CD4-positive, alpha-beta T cell (primary cell): ENCODE measurements at regions of chr16 and their contacts with region 1.

Region 1: DNA sequence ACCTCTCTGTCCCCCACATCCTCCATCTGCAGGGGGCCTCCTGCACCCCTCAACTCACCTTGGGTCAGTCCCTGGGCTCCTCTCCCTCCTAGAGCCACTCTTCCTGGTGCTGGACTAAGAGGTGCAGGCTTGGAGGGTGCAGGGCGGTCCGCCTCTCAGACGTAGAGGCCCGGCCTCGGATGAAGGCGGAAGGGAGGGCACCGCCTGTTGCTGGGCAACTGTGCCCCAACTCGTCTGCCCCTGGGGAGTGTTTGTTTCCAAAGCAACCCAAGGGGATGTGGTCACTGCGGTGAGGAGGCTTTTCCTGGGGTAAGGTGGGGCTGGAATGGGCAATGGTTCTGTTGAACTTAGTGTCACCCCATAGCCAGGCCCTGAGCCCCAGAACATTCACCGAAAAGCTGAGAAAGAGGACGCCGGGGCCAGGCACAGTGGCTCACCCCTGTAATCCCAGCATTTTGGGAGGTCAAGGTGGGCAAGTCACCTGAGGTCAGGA is at the start of gene C16orf54:
- DNase-seq: peak; percentile 88 to 99 (median 92)
- ATAC-seq: peak; percentile 82
- H3K4me3 ChIP-seq: peak within 1 kb of the TSS; percentile 74
- H3K4me3 Mint-ChIP-seq: peak within 1 kb of the TSS; percentile 99
- H3K27ac ChIP-seq: peak within 1 kb of the TSS; percentile 93 to 96
- H3K27ac Mint-ChIP-seq: peak within 1 kb of the TSS; percentile 98
- H3K4me1 ChIP-seq: peaks cover 87% of the 10 kb centered on the region
- H3K4me1 Mint-ChIP-seq: peaks cover 70% of the 10 kb centered on the region
- H3K27me3 ChIP-seq: no peaks in the 10 kb centered on the region
- H3K27me3 Mint-ChIP-seq: no peaks in the 10 kb centered on the region
- CTCF ChIP-seq: no peak
- total RNA-seq, gene C16orf54: 250 to 261 TPM

Region 2: GRCh38 chr16:29729116-29729521 is 16.8 kb before region 1 on chr16:
- CTCF ChIA-PET with region 1: no interaction called
- POLR2A ChIA-PET with region 1: interaction called, 11 read pairs
- intact Hi-C with region 1: no loop called
- DNase-seq: peak in 2 of 14 experiments; percentile 31 to 36
- ATAC-seq: no peak
- H3K4me3 ChIP-seq: no peak overlapping the region
- H3K4me3 Mint-ChIP-seq: no peak overlapping the region
- H3K27ac ChIP-seq: no peak overlapping the region
- H3K27ac Mint-ChIP-seq: no peak overlapping the region
- H3K4me1 ChIP-seq: peaks cover 28% of the 10 kb centered on the region
- H3K4me1 Mint-ChIP-seq: peaks cover 28% of the 10 kb centered on the region
- H3K27me3 ChIP-seq: no peaks in the 10 kb centered on the region
- H3K27me3 Mint-ChIP-seq: no peaks in the 10 kb centered on the region
- CTCF ChIP-seq: peak; percentile 58

Region 3: GRCh38 chr16:29757950-29758466 is 12.1 kb after region 1 on chr16:
- CTCF ChIA-PET with region 1: interaction called, 3 read pairs
- POLR2A ChIA-PET with region 1: interaction called, 19 read pairs
- intact Hi-C with region 1: loop called in 1 of 2 experiments (anchors 1 kb)
- DNase-seq: no peak
- ATAC-seq: no peak
- H3K4me3 ChIP-seq: no peak overlapping the region
- H3K4me3 Mint-ChIP-seq: no peak overlapping the region
- H3K27ac ChIP-seq: no peak overlapping the region
- H3K27ac Mint-ChIP-seq: peak overlapping the region; percentile 80
- H3K4me1 ChIP-seq: peaks cover 49% of the 10 kb centered on the region
- H3K4me1 Mint-ChIP-seq: peaks cover 47% of the 10 kb centered on the region
- H3K27me3 ChIP-seq: no peaks in the 10 kb centered on the region
- H3K27me3 Mint-ChIP-seq: no peaks in the 10 kb centered on the region
- CTCF ChIP-seq: no peak

Region 4: GRCh38 chr16:29784901-29785500 is 39.1 kb after region 1 on chr16:
- CTCF ChIA-PET with region 1: interaction called, 16 read pairs
- POLR2A ChIA-PET with region 1: interaction called, 50 read pairs
- intact Hi-C with region 1: loop called in 1 of 2 experiments (anchors 1 kb)
- DNase-seq: peak; percentile 55 to 87 (median 74)
- ATAC-seq: peak; percentile 91
- H3K4me3 ChIP-seq: peak overlapping the region; percentile 40
- H3K4me3 Mint-ChIP-seq: peak overlapping the region; percentile 80
- H3K27ac ChIP-seq: no peak overlapping the region
- H3K27ac Mint-ChIP-seq: peak overlapping the region; percentile 18
- H3K4me1 ChIP-seq: peaks cover 25% of the 10 kb centered on the region
- H3K4me1 Mint-ChIP-seq: peaks cover 33% of the 10 kb centered on the region
- H3K27me3 ChIP-seq: no peaks in the 10 kb centered on the region
- H3K27me3 Mint-ChIP-seq: no peaks in the 10 kb centered on the region
- CTCF ChIP-seq: peak; percentile 85

Region 5: DNA sequence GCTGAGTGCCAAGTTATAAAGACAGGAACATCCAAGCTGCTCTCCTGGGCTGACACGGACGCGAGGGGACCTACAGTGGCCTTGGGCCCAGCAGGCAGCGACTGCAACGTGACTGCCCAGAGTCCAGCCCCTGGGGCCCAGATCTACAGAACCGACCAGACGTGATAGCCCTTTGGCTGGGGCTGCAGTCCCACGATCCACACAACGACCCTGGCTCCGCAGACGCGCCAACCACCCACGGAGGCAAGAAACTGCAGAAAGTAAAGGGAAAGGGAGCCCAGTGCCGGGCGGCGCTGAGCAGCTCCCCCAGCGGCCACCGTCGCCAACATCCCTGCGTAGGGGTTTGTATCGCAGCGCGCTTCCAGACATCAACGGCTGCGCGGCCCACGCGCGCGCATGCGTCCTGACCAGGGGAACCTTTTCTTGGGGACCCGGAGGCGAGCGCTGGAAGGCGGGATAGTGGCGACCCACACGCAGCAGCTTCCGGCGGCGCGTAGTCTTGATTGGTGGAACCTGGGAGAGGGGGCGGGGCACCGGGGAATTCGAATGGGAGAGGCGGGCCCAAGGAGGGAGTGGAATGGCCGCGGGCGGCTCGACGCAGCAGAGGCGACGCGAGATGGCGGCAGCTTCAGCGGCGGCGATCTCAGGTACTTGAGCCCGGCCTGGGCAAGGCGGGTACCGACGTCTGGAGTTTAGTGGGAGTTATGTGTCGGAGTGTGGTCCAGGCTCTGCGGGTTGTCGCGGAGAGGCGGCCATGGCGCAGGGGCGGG is 44.5 kb after region 1 on chr16 and contains the start of gene KIF22:
- CTCF ChIA-PET with region 1: interaction called, 16 read pairs
- POLR2A ChIA-PET with region 1: interaction called, 50 read pairs
- intact Hi-C with region 1: loop called in 1 of 2 experiments (anchors 1 kb)
- DNase-seq: peak; percentile 99 to 100 (median 100)
- ATAC-seq: peak; percentile 90
- H3K4me3 ChIP-seq: peak within 1 kb of the TSS; percentile 93
- H3K4me3 Mint-ChIP-seq: peak within 1 kb of the TSS; percentile 96
- H3K27ac ChIP-seq: peak within 1 kb of the TSS; percentile 82 to 83
- H3K27ac Mint-ChIP-seq: peak within 1 kb of the TSS; percentile 97
- H3K4me1 ChIP-seq: peaks cover 43% of the 10 kb centered on the region
- H3K4me1 Mint-ChIP-seq: peaks cover 51% of the 10 kb centered on the region
- H3K27me3 ChIP-seq: no peaks in the 10 kb centered on the region
- H3K27me3 Mint-ChIP-seq: no peaks in the 10 kb centered on the region
- CTCF ChIP-seq: peak; percentile 80
- total RNA-seq, gene KIF22: 99.0 to 101 TPM

Region 6: DNA sequence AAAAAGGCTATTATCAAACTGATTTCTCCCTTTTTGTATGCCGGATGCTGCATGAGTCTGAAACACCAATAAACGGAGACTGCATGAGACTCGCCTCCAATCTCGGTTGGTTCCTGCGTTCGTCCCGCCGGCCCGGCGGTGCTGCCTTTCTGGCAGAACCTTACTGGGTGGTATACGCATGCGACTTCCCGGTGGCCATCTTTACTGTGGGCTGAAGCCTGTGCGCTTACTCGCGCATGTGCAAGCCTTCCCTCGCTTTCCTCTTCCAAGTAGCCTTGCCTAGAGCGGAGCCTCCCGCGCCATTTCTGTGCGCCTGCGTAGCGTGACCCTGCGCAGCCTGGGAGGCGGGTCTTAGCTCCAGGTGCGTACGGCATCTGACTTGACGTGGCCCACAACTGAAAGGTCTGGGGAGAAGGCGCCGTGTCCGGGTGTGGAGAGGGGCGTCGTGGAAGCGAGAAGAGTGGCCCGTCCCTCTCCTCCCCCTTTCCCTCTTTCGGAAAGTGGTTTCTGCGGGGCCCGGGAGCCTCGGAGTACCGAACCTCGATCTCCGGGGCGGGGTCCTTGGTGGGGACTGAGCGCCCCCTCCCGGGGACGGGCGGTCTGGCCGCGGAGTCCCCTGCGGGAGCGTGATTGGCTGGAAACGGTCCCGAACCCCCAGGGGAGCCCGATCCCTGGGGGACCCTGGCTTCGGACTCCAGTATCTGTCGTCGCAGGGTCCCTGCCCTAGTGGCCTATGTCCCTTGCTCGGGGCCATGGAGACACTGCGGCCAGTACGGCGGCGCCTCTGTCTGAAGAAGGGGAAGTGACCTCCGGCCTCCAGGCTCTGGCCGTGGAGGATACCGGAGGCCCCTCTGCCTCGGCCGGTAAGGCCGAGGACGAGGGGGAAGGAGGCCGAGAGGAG is 70.1 kb after region 1 on chr16 and contains the start of gene PAGR1:
- CTCF ChIA-PET with region 1: interaction called, 4 read pairs
- POLR2A ChIA-PET with region 1: interaction called, 11 read pairs
- intact Hi-C with region 1: loop called in 1 of 2 experiments (anchors 1 kb)
- DNase-seq: peak; percentile 97 to 100 (median 98)
- ATAC-seq: peak; percentile 73
- H3K4me3 ChIP-seq: peak within 1 kb of the TSS; percentile 95
- H3K4me3 Mint-ChIP-seq: peak within 1 kb of the TSS; percentile 97
- H3K27ac ChIP-seq: peak within 1 kb of the TSS; percentile 84 to 94
- H3K27ac Mint-ChIP-seq: peak within 1 kb of the TSS; percentile 90
- H3K4me1 ChIP-seq: peaks cover 92% of the 10 kb centered on the region
- H3K4me1 Mint-ChIP-seq: peaks cover 83% of the 10 kb centered on the region
- H3K27me3 ChIP-seq: no peaks in the 10 kb centered on the region
- H3K27me3 Mint-ChIP-seq: no peaks in the 10 kb centered on the region
- CTCF ChIP-seq: peak; percentile 97
- total RNA-seq, gene PAGR1: 20.3 TPM